MCF 10A (cell line): ENCODE measurements at regions of chr7 and their contacts with region 1.

Region 1: GRCh38 chr7:123871998-123872867 is 27.3 kb downstream of the HYAL4 start:
- DNase-seq: peak; percentile 72
- H3K4me3 Mint-ChIP-seq: no peak overlapping the region
- H3K27ac Mint-ChIP-seq: no peak overlapping the region
- H3K4me1 Mint-ChIP-seq: no peaks in the 10 kb centered on the region
- H3K27me3 Mint-ChIP-seq: no peaks in the 10 kb centered on the region
- CTCF ChIP-seq: peak; percentile 48

Region 2: DNA sequence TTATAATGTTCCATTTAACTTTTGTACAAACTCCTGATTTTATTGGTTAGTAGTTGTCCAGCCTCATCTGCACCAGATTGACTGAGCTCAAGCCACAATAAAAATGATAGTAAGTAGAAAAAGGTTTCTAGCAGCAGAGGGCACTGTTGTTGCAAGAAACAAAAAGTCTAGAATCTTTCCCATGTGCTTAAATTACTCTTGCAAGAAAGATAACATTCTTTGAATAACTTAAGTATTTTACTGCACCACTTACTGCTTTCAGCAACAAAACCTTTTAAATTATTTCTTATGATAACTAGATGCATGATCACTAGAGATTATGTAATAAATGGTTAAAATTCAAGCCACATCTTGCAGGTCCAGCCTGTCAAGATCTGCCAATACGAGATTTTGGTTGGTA is 189.5 kb before region 1 on chr7:
- CTCF ChIA-PET with region 1: interaction called, 11 read pairs
- POLR2A ChIA-PET with region 1: no interaction called
- intact Hi-C with region 1: no loop called
- DNase-seq: peak; percentile 58
- H3K4me3 Mint-ChIP-seq: no peak overlapping the region
- H3K27ac Mint-ChIP-seq: no peak overlapping the region
- H3K4me1 Mint-ChIP-seq: no peaks in the 10 kb centered on the region
- H3K27me3 Mint-ChIP-seq: no peaks in the 10 kb centered on the region
- CTCF ChIP-seq: peak; percentile 46

Region 3: GRCh38 chr7:123888192-123888591 is 16.0 kb after region 1 on chr7:
- CTCF ChIA-PET with region 1: interaction called, 10 read pairs
- POLR2A ChIA-PET with region 1: no interaction called
- intact Hi-C with region 1: no loop called
- DNase-seq: no peak
- H3K4me3 Mint-ChIP-seq: no peak overlapping the region
- H3K27ac Mint-ChIP-seq: no peak overlapping the region
- H3K4me1 Mint-ChIP-seq: no peaks in the 10 kb centered on the region
- H3K27me3 Mint-ChIP-seq: no peaks in the 10 kb centered on the region
- CTCF ChIP-seq: no peak

Region 4: DNA sequence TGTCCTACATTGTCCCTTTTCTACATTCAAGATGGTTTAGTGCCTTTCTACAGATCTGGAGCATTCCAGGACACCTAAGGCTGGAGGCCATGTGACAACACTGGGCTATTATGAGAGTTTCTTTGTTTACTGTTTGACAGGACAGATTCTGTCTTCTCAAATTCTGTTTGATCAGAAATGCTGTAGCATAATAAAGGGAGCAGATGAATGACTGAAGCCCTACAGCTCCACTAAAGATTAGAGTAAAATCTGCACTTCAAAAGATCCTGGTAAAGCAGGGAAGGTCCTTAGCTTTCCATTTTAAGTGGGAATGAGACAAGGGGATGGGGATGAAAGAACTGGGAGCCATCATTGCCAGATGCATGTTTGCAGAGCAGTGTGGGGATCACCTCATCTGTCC is 122.2 kb after region 1 on chr7:
- CTCF ChIA-PET with region 1: no interaction called
- POLR2A ChIA-PET with region 1: no interaction called
- intact Hi-C with region 1: no loop called
- DNase-seq: no peak
- H3K4me3 Mint-ChIP-seq: no peak overlapping the region
- H3K27ac Mint-ChIP-seq: no peak overlapping the region
- H3K4me1 Mint-ChIP-seq: peaks cover 9% of the 10 kb centered on the region
- H3K27me3 Mint-ChIP-seq: no peaks in the 10 kb centered on the region
- CTCF ChIP-seq: no peak